Heart right ventricle (tissue), 16 donors: ENCODE measurements at regions of chr1 and their contacts with region 1.

Region 1: GRCh38 chr1:40338745-40339424 is 21.8 kb upstream of the COL9A2 start:
- DNase-seq: peak; percentile 67 to 80
- ATAC-seq: peak; percentile 67 to 86 (median 83)
- H3K4me3 ChIP-seq: peak overlapping the region in 1 of 10 donors; percentile 37
- H3K27ac ChIP-seq: peak overlapping the region in 1 of 10 donors; percentile 84
- H3K4me1 ChIP-seq: peaks cover 0 to 52% (median 0%) of the 10 kb centered on the region in 9 donors
- H3K27me3 ChIP-seq: peaks cover 0 to 26% (median 13%) of the 10 kb centered on the region in 7 donors
- CTCF ChIP-seq: peak; percentile 93 to 99 (median 98)

Region 2: DNA sequence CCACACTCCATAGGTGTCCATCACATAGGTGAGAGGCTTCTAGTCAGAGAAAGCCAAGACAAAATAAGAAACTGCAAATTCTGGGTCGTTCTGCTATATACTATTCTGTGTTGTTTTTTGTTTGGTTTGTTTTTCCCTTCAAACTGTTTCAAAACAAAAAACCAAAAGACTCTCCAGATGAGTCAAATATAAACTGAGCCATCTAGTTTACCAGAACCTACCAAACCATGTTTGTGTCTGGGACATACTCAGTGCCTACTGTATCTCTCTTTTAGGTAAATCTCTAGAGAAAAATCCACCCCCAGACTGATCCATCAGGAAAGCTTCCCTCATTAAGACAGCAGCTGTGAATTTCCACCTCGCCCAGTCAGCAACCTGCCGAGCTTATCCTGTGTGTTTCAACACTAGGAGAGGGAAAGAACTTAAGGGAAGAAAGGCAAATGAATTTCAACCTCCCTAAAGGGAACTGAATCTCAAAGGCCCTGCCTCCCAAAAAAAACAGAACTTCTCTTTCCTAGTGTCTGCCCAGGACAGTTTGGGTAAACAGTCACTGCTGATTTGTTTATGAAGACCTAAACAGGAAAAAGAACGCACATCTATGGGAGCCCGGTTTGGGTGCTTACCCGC is 259.0 kb before region 1 on chr1:
- intact Hi-C with region 1: loop called in 3 of 10 experiments (anchors 5 to 10 kb)
- DNase-seq: no peak
- ATAC-seq: peak in 1 of 8 donors; percentile 30
- H3K4me3 ChIP-seq: no peak overlapping the region
- H3K27ac ChIP-seq: peak overlapping the region in 1 of 10 donors; percentile 69
- H3K4me1 ChIP-seq: peaks cover 0 to 79% (median 0%) of the 10 kb centered on the region in 9 donors
- H3K27me3 ChIP-seq: no peaks in the 10 kb centered on the region
- CTCF ChIP-seq: no peak

Region 3: DNA sequence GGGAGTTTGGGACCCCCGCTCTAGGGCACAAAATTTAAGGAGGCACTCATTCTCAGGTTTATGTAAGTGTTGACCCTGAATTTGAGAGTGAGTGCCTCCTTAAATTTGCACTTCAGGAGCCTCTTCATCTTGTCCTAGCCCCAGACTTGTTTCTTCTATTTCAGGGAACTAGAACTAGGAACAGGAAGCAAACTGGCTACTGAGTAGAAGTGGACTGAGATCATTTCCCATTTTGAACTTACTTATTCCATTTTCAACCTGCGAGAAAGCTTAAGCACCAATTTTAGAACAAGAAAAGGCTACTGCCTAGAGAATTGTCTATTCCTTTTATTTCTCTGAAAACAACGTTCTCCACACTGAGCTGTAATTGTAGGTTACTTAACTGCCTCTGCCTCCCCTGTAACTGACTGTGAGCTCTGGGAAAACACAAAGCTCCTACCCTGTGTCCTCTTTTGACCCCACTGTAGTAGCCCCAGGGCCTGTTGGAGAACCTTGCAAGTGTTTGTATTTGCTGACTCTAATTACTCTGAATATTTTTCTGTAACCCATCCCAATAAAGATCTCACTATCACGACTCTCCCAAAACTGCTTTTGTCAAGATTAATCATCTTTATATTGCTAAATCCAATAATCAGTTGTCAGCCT is 244.3 kb before region 1 on chr1:
- intact Hi-C with region 1: loop called in 2 of 10 experiments (anchors 5 to 10 kb)
- DNase-seq: no peak
- ATAC-seq: peak in 3 of 8 donors; percentile 16 to 17 (median 16)
- H3K4me3 ChIP-seq: no peak overlapping the region
- H3K27ac ChIP-seq: peak overlapping the region in 4 of 10 donors; percentile 20 to 66 (median 28)
- H3K4me1 ChIP-seq: peaks cover 2 to 43% (median 14%) of the 10 kb centered on the region in 9 donors
- H3K27me3 ChIP-seq: no peaks in the 10 kb centered on the region
- CTCF ChIP-seq: no peak

Region 4: GRCh38 chr1:40143891-40144575 is 194.9 kb before region 1 on chr1:
- intact Hi-C with region 1: loop called in 6 of 10 experiments (anchors 2 to 5 kb)
- DNase-seq: peak in 1 of 2 donors; percentile 57
- ATAC-seq: peak in 7 of 8 donors; percentile 58 to 81 (median 75)
- H3K4me3 ChIP-seq: no peak overlapping the region
- H3K27ac ChIP-seq: no peak overlapping the region
- H3K4me1 ChIP-seq: peaks cover 0 to 8% (median 0%) of the 10 kb centered on the region in 9 donors
- H3K27me3 ChIP-seq: peaks cover 0 to 62% (median 38%) of the 10 kb centered on the region in 7 donors
- CTCF ChIP-seq: peak; percentile 59 to 85 (median 82)

Region 5: GRCh38 chr1:40153073-40153770 is 185.7 kb before region 1 on chr1:
- intact Hi-C with region 1: loop called in 8 of 10 experiments (anchors 1 to 5 kb)
- DNase-seq: peak in 1 of 2 donors; percentile 22
- ATAC-seq: no peak
- H3K4me3 ChIP-seq: no peak overlapping the region
- H3K27ac ChIP-seq: no peak overlapping the region
- H3K4me1 ChIP-seq: peaks cover 0 to 23% (median 0%) of the 10 kb centered on the region in 9 donors
- H3K27me3 ChIP-seq: peaks cover 0 to 15% (median 8%) of the 10 kb centered on the region in 7 donors
- CTCF ChIP-seq: peak; percentile 35 to 86 (median 75)

Region 6: DNA sequence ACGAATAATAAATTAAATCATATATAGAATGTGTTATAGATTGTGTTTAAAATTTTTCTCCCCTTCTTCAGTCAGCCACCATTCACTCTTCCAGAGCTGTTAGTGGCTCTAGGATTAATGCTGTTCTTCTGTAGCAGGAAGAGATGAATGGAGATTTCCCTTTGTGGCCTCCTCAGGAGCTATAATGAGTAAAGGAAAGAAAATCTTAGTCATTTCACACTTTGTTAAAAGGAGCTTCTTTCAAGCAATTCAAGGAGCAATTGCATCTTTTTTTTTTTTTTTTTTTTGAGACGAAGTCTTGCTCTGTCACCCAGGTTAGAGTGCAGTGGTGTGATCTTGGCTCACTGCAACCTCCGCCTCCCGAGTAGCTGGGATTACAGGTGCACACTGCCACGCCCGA is 114.8 kb before region 1 on chr1:
- intact Hi-C with region 1: no loop called
- DNase-seq: no peak
- ATAC-seq: no peak
- H3K4me3 ChIP-seq: no peak overlapping the region
- H3K27ac ChIP-seq: no peak overlapping the region
- H3K4me1 ChIP-seq: no peaks in the 10 kb centered on the region
- H3K27me3 ChIP-seq: no peaks in the 10 kb centered on the region
- CTCF ChIP-seq: no peak